Activated CD4-positive, alpha-beta memory T cell treated with anti-CD3 and anti-CD28 coated beads for 36 hours (primary cell): ENCODE measurements at regions of chr12 and their contacts with region 1.

Region 1: DNA sequence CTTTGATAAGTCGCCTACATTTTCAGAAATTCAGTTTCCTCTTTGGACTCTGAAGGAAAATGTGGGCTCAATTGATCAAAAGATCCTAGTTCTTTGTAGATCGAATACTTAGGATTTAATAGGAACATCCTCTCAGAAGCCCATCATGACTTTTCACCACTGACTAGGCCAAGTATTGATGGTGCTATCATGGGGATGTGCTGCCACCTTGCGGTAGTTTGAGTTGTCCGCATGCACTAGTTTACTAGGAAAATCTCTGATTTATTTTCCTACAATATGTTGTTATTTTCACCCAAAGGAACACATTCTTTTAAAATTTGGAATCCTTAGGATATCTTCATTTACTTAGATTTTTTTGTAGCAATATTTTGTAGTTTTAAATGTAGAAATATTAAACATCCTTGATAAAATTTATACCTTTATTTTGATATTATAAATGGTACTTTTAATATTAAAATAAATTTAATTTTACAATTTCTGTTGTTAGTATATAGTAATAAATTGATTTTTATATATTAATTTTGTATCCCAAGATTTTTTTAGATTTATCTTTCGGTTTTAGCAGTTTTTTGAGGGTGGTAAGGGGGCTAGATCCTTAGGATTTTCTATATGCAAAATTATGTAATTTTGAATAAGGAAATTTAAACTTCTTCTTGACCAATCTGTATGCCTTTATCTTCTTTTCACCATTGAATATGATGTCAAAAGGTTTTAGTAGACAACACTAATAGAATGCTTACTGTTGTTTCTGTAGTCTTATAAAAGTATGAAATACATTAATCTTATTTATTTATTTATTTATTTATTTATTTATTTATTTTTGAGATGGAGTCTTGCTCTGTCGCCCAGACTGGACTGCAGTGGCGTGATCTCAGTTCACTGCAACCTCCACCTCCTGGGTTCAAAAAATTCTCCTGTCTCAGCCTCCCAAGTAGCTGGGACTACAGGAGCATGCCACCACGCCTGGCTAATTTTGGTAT is 52.9 kb upstream of the OR9K2 start:
- DNase-seq: peak; percentile 84
- H3K4me3 Mint-ChIP-seq: no peak overlapping the region
- H3K27ac Mint-ChIP-seq: no peak overlapping the region
- H3K4me1 Mint-ChIP-seq: peaks cover 4% of the 10 kb centered on the region
- H3K27me3 Mint-ChIP-seq: peaks cover 21% of the 10 kb centered on the region

Region 2: GRCh38 chr12:54723379-54724256 is 349.7 kb before region 1 on chr12:
- CTCF ChIA-PET with region 1: interaction called, 22 read pairs
- POLR2A ChIA-PET with region 1: interaction called, 3 read pairs
- intact Hi-C with region 1: loop called (anchors 1 kb)
- DNase-seq: peak; percentile 32
- H3K4me3 Mint-ChIP-seq: no peak overlapping the region
- H3K27ac Mint-ChIP-seq: no peak overlapping the region
- H3K4me1 Mint-ChIP-seq: peaks cover 13% of the 10 kb centered on the region
- H3K27me3 Mint-ChIP-seq: peaks cover 2% of the 10 kb centered on the region

Region 3: GRCh38 chr12:54853995-54854566 is 219.3 kb before region 1 on chr12 and contains the start of gene MUCL1:
- CTCF ChIA-PET with region 1: interaction called, 20 read pairs
- POLR2A ChIA-PET with region 1: no interaction called
- intact Hi-C with region 1: loop called (anchors 1 kb)
- DNase-seq: peak; percentile 80
- H3K4me3 Mint-ChIP-seq: no peak within 1 kb of the TSS
- H3K27ac Mint-ChIP-seq: no peak within 1 kb of the TSS
- H3K4me1 Mint-ChIP-seq: peaks cover 17% of the 10 kb centered on the region
- H3K27me3 Mint-ChIP-seq: peaks cover 2% of the 10 kb centered on the region
- total RNA-seq, gene MUCL1: not detected

Region 4: DNA sequence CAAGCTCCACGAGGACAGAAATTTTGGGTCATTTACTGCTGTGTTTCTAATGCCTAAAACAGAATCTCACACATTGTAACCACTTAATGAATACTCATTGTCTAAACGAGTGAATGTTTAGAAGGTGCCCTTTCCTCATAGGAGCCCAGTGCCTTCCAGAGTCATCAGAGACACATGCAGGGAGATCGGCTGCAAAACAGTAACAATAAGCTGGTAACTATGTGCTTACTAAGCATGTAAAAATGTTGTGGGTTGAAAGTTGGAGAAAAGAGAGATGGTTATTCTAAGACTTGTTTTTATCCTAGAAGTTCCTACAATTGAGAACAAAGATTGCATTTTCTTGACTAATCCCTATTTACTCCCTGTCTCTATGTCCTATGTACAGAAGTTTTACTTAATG is 96.2 kb before region 1 on chr12:
- CTCF ChIA-PET with region 1: interaction called, 14 read pairs
- POLR2A ChIA-PET with region 1: interaction called, 3 read pairs
- intact Hi-C with region 1: no loop called
- DNase-seq: no peak
- H3K4me3 Mint-ChIP-seq: peak overlapping the region; percentile 57
- H3K27ac Mint-ChIP-seq: peak overlapping the region; percentile 85
- H3K4me1 Mint-ChIP-seq: peaks cover 90% of the 10 kb centered on the region
- H3K27me3 Mint-ChIP-seq: no peaks in the 10 kb centered on the region

Region 5: GRCh38 chr12:55008944-55009585 is 64.3 kb before region 1 on chr12:
- CTCF ChIA-PET with region 1: interaction called, 697 read pairs
- POLR2A ChIA-PET with region 1: no interaction called
- intact Hi-C with region 1: no loop called
- DNase-seq: no peak
- H3K4me3 Mint-ChIP-seq: no peak overlapping the region
- H3K27ac Mint-ChIP-seq: no peak overlapping the region
- H3K4me1 Mint-ChIP-seq: no peaks in the 10 kb centered on the region
- H3K27me3 Mint-ChIP-seq: no peaks in the 10 kb centered on the region

Region 6: GRCh38 chr12:55049676-55050075 is 23.7 kb before region 1 on chr12:
- CTCF ChIA-PET with region 1: interaction called, 29 read pairs
- POLR2A ChIA-PET with region 1: no interaction called
- intact Hi-C with region 1: no loop called
- DNase-seq: no peak
- H3K4me3 Mint-ChIP-seq: no peak overlapping the region
- H3K27ac Mint-ChIP-seq: no peak overlapping the region
- H3K4me1 Mint-ChIP-seq: no peaks in the 10 kb centered on the region
- H3K27me3 Mint-ChIP-seq: no peaks in the 10 kb centered on the region

Region 7: GRCh38 chr12:55126106-55126505 is 52.8 kb after region 1 on chr12 and contains the start of gene OR9K2:
- CTCF ChIA-PET with region 1: no interaction called
- POLR2A ChIA-PET with region 1: no interaction called
- intact Hi-C with region 1: no loop called
- DNase-seq: no peak
- H3K4me3 Mint-ChIP-seq: no peak within 1 kb of the TSS
- H3K27ac Mint-ChIP-seq: no peak within 1 kb of the TSS
- H3K4me1 Mint-ChIP-seq: no peaks in the 10 kb centered on the region
- H3K27me3 Mint-ChIP-seq: peaks cover 34% of the 10 kb centered on the region
- total RNA-seq, gene OR9K2: not detected